ENCODE measurements at regions of chr10 and their contacts with region 1.

Region 1: GRCh38 chr10:97553575-97554031 is 19.0 kb upstream of the ANKRD2 start:
- DNase-seq: peak; percentile 86

Region 2: GRCh38 chr10:97400665-97401454 is 152.7 kb before region 1 on chr10 and contains the start of gene RRP12:
- intact Hi-C with region 1: loop called (anchors 10 kb)
- DNase-seq: peak; percentile 92
- total RNA-seq, gene RRP12: 23.5 TPM

Region 3: GRCh38 chr10:97463363-97464132 is 90.1 kb before region 1 on chr10:
- intact Hi-C with region 1: loop called (anchors 2 kb)
- DNase-seq: no peak

Measured in cardiac septum (tissue), 1 donor.